Heart left ventricle (tissue), 16 donors: ENCODE measurements at regions of chr15 and their contacts with region 1.

Region 1: DNA sequence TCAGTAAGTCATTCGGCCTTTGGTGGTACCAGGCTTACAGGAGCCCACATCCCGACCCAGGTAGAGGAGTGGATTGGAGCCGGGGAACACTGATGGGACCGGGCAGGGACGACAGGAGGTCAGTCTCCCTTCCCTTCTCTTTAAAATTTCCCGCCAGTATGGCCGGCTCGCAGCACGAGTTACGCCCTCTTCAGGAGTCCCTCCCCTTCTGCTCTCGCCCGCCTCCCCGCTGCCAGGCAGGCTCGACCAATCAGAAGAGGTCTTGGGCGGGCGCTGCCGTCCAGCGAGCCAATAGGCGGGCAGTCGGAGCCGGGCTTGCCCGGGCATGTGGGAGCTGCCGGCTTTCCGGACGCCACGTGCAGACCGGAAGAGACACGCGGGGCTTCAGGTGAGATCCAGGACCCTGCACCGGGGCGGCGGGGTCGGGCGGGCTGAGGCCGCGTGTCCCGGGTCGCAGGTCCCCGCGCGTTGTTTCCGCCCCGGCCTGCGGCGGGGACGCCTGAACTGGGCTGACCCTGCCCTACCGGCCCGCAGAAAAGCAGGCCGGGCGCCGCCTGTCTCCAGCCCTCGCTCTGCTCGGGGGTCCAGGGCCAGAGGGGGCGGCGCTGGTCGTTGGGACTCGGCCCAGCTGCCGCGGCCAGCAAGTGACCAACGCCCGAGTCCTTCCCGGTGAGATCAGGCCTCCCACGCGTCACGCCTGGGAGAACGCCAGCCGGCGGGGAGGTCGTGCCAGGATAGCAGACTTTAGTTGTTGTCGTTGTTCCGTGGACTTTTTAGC is at the start of gene AEN:
- DNase-seq: peak; percentile 95 to 98 (median 97)
- ATAC-seq: peak; percentile 98 to 99 (median 99)
- H3K4me3 ChIP-seq: peak within 1 kb of the TSS; percentile 58 to 98 (median 82)
- H3K27ac ChIP-seq: peak within 1 kb of the TSS; percentile 68 to 96 (median 90)
- H3K4me1 ChIP-seq: peaks cover 3 to 48% (median 27%) of the 10 kb centered on the region in 12 donors
- H3K27me3 ChIP-seq: no peaks in the 10 kb centered on the region
- CTCF ChIP-seq: peak in 5 of 12 donors; percentile 19 to 64 (median 26)
- POLR2A ChIP-seq: peak in 1 of 2 donors; percentile 49
- total RNA-seq, gene AEN: 4.5 to 11.9 (median 6.6) TPM

Region 2: GRCh38 chr15:88467073-88467934 is 153.9 kb before region 1 on chr15 and contains the starts of genes MRPL46 and MRPS11:
- intact Hi-C with region 1: loop called in 1 of 10 experiments (anchors 5 kb)
- DNase-seq: peak; percentile 91 to 94 (median 92)
- ATAC-seq: peak; percentile 90 to 97 (median 96)
- H3K4me3 ChIP-seq: peak within 1 kb of the TSS; percentile 65 to 99 (median 83)
- H3K27ac ChIP-seq: peak within 1 kb of the TSS; percentile 87 to 98 (median 93)
- H3K4me1 ChIP-seq: peaks cover 6 to 45% (median 30%) of the 10 kb centered on the region in 12 donors
- H3K27me3 ChIP-seq: no peaks in the 10 kb centered on the region
- CTCF ChIP-seq: no peak
- POLR2A ChIP-seq: peak in 1 of 2 donors; percentile 23
- total RNA-seq, gene MRPL46: 40.7 to 113 (median 75.2) TPM
- total RNA-seq, gene MRPS11: 49.7 to 72.7 (median 59.0) TPM

Region 3: DNA sequence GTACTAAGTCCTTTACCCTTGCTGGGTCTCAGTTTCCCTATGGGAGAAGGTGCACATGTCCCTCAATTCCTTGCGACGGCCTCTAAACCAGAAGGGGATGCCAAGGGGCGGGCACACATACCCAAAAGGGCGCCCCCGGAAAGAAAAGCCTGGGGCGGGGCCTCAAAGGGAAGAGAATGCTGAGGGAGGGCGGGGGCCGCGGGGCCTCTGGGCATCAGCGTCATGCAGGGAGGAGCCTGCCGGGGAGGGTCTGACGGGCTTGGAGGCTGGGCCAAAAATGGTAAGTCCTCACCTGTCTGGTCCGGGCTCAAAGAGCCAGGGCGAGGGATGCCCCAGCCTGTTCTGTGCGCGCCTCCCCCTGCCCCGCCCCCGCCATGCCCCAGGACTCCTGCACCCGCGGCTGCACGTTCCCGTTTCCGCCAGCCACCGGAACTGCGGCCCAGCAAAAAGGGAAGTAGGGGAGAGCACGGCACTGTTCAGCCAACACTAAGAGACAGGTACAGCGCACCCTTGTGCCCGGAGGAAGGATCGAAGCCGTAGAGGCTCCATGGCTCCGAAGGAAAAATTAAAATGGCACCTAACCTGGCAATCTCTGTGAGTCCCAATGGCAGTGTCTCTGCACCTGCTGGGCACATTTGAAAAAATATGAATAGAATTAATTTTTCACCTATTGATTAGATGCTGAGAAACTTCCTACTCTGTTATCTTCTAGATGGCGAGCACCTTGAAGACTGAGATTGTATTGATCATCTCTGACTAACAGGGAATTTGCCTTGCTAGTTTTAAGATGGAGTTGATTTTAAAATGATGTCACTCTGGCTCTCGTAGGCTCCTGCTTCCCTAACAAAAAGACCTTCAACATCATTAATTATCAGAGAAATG is 74.7 kb before region 1 on chr15 and contains the start of gene DET1:
- intact Hi-C with region 1: loop called in 2 of 10 experiments (anchors 2 to 10 kb)
- DNase-seq: peak; percentile 95 to 97 (median 96)
- ATAC-seq: peak; percentile 98 to 99 (median 99)
- H3K4me3 ChIP-seq: peak within 1 kb of the TSS; percentile 37 to 83 (median 78)
- H3K27ac ChIP-seq: peak within 1 kb of the TSS; percentile 82 to 97 (median 92)
- H3K4me1 ChIP-seq: peaks cover 0 to 46% (median 21%) of the 10 kb centered on the region in 12 donors
- H3K27me3 ChIP-seq: no peaks in the 10 kb centered on the region
- CTCF ChIP-seq: peak; percentile 64 to 91 (median 78)
- POLR2A ChIP-seq: peak in 1 of 2 donors; percentile 27
- total RNA-seq, gene DET1: 6.2 to 12.4 (median 8.7) TPM

Region 4: DNA sequence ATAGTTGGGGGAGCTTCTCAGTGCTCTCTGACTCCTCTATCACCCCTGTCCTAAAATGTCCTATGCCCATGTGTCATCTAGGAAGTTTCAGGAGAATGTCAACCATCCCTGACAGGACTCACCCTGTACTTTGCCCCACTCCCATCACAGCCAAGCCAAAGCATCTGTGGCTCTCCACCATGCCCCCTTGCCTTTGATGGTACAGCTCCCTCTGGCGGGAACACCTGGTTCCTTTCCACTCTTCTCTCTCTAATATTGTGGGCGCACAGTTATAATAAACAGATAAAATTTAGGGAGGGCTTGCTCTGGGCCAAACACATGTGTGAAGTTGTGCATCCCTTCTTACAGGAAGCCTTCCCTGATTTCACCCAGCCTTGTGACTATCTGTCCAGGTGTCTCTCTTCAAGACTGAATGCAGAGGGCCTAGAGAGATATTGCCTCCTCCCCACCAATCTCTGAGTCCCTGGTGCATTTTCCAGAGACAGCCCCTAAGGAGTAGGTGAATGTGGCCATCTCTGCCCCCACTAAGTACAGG is 80.4 kb after region 1 on chr15:
- intact Hi-C with region 1: loop called in 1 of 10 experiments (anchors 10 kb)
- DNase-seq: no peak
- ATAC-seq: no peak
- H3K4me3 ChIP-seq: no peak overlapping the region
- H3K27ac ChIP-seq: no peak overlapping the region
- H3K4me1 ChIP-seq: peaks cover 0 to 13% (median 2%) of the 10 kb centered on the region in 12 donors
- H3K27me3 ChIP-seq: peaks cover 0 to 21% (median 5%) of the 10 kb centered on the region in 9 donors
- CTCF ChIP-seq: no peak
- POLR2A ChIP-seq: no peak

Region 5: GRCh38 chr15:88834211-88834812 is 213.1 kb after region 1 on chr15:
- intact Hi-C with region 1: loop called in 2 of 10 experiments (anchors 10 kb)
- DNase-seq: peak in 3 of 5 donors; percentile 23 to 56 (median 26)
- ATAC-seq: peak in 3 of 4 donors; percentile 44 to 75 (median 75)
- H3K4me3 ChIP-seq: no peak overlapping the region
- H3K27ac ChIP-seq: peak overlapping the region in 1 of 12 donors; percentile 34
- H3K4me1 ChIP-seq: peaks cover 0 to 8% (median 0%) of the 10 kb centered on the region in 12 donors
- H3K27me3 ChIP-seq: peaks cover 0 to 3% (median 0%) of the 10 kb centered on the region in 9 donors
- CTCF ChIP-seq: peak; percentile 39 to 76 (median 61)
- POLR2A ChIP-seq: no peak

Region 6: DNA sequence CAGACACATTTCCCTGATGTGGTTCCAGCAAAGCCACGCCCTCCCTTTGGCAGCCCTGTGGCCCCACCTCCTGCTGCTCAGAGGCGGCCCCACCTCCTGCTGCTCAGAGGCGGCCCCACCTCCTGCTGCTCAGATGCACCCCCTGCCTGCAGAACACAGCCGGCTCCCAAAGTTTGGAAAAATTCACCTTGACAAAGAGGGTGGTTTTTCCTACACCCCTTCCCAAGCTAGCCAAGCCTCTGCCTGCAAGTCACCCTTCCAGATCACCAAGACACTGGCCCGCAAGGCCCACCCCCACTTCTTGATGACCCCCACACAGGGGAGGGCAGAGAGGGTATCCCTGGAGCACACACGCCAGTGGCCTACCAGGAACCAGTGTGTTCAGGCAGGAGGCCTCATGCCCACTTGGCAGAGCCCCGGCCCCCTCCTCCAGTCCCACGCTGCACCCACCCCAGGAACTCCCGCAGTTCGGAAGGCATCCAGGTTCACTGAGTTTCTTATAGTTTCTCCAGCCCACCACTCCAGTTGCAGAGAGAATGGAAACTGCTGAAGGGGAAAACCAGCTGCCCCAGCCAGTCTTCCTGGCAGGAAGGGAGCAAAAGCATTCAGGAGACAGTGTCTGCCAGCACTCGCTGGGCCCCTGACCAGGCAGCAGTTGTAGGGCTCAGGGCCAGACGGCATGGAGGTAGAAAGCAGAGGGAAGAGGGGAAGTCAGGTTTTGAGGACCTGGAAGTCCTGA is 276.4 kb after region 1 on chr15:
- intact Hi-C with region 1: loop called in 5 of 10 experiments (anchors 5 to 10 kb)
- DNase-seq: peak; percentile 84 to 92 (median 90)
- ATAC-seq: peak; percentile 77 to 95 (median 88)
- H3K4me3 ChIP-seq: peak overlapping the region in 4 of 12 donors; percentile 5 to 28 (median 11)
- H3K27ac ChIP-seq: peak overlapping the region in 11 of 12 donors; percentile 68 to 87 (median 81)
- H3K4me1 ChIP-seq: peaks cover 5 to 72% (median 45%) of the 10 kb centered on the region in 12 donors
- H3K27me3 ChIP-seq: peaks cover 0 to 8% (median 0%) of the 10 kb centered on the region in 9 donors
- CTCF ChIP-seq: peak; percentile 47 to 88 (median 74)
- POLR2A ChIP-seq: no peak

Region 7: DNA sequence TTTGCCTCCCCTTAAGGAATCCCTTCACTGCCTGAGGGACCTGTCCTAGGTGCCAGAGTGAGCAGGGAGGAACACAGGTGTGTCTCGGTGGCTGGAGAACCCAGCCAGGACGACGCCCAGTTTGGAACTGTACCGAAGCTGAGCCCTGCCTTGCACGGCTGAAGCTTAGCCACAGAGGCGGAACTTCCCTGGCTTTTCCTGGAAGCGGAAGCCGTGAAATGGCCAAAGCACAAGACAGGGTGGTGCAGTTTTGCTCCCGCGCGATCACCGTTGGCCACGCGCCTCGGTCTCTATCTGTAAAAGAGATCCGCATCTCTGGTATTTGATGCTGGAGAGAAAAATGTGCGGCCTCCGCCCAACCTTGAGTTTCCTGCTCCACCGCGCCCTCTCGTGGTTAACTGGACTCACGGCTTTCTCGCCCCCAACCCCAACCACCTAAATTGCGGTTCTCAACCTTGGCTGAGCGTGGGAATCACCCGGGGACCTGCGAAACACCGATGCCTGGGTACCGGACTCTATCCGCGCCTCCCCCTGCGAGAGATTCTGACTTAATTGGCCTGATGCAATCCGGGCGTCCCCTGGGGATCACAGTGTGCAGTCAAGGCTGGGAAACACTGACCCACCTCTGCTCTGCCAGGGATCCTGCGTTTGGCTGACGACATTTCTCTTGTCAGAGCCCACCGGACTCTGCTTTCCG is 396.3 kb after region 1 on chr15:
- intact Hi-C with region 1: loop called in 1 of 10 experiments (anchors 10 kb)
- DNase-seq: peak; percentile 79 to 87 (median 80)
- ATAC-seq: peak; percentile 57 to 73 (median 71)
- H3K4me3 ChIP-seq: peak overlapping the region in 9 of 12 donors; percentile 37 to 49 (median 42)
- H3K27ac ChIP-seq: peak overlapping the region in 11 of 12 donors; percentile 59 to 89 (median 77)
- H3K4me1 ChIP-seq: peaks cover 5 to 50% (median 29%) of the 10 kb centered on the region in 12 donors
- H3K27me3 ChIP-seq: no peaks in the 10 kb centered on the region
- CTCF ChIP-seq: peak; percentile 72 to 91 (median 80)
- POLR2A ChIP-seq: no peak

Region 8: GRCh38 chr15:89041507-89041906 is 420.3 kb after region 1 on chr15:
- intact Hi-C with region 1: no loop called
- DNase-seq: no peak
- ATAC-seq: no peak
- H3K4me3 ChIP-seq: peak overlapping the region in 2 of 12 donors; percentile 6 to 24
- H3K27ac ChIP-seq: no peak overlapping the region
- H3K4me1 ChIP-seq: no peaks in the 10 kb centered on the region
- H3K27me3 ChIP-seq: no peaks in the 10 kb centered on the region
- CTCF ChIP-seq: no peak
- POLR2A ChIP-seq: no peak